ENCODE measurements at regions of chr11 and their contacts with region 1.

Region 1: DNA sequence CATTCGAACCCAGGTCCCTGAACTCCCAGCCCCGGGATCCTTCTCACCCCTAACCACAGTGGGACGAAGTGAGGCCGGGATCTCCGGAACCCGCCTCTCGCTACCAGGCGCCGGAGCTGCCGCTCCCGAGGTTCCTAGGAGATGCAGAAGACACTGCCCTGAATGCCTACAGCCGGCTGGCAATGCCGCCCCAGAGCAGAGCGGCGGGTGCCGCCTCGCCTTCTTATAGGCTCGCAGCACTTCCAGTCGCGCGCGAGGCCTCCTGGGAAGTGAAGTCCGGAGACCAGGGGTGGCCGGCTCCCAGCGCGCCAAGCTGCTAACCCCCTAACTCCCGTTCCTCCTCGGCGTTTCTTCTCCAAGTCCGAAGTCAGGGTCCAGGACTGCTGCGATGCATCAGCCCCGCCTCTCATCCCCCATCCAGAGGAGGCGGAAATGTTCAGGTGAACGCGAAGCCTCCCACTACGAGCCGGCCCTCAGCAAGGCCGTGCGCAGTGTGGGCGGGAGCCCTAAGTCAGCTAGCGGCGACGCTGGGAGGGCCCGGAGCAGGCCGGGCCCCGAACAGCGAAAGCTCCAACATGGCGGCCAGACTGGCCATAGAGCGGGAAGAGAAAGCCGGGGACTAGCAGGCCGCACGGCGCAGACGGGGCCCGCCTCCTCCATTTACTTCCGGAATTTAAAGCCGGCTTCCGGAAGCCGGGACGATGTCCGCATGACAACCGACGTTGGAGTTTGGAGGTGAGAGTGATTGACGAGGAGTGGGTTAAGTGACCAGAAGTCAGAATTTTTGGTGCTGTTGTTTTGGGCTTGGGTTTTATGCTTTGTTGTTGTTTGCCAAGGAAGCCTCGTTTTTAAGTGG is at the starts of genes CYB561A3 and TMEM138:
- DNase-seq: peak; percentile 89 to 96
- H3K4me3 ChIP-seq: peak within 1 kb of the TSS; percentile 86
- H3K27ac ChIP-seq: peak within 1 kb of the TSS; percentile 93
- H3K4me1 ChIP-seq: peaks cover 20% of the 10 kb centered on the region
- H3K27me3 ChIP-seq: no peaks in the 10 kb centered on the region
- CTCF ChIP-seq: no peak
- total RNA-seq, gene CYB561A3: 96.9 and 120 TPM in 2 replicates
- total RNA-seq, gene TMEM138: 32.5 and 46.1 TPM in 2 replicates

Region 2: GRCh38 chr11:60961203-60961602 is 400.7 kb before region 1 on chr11:
- CTCF ChIA-PET with region 1: no interaction called
- POLR2A ChIA-PET with region 1: interaction called, 11 read pairs
- intact Hi-C with region 1: no loop called
- DNase-seq: no peak
- H3K4me3 ChIP-seq: no peak overlapping the region
- H3K27ac ChIP-seq: no peak overlapping the region
- H3K4me1 ChIP-seq: 0 out of 2 replicates have a peak, but pooled peaks cover 4% of the 10 kb centered on the region
- H3K27me3 ChIP-seq: peaks cover 10% of the 10 kb centered on the region; the same call in 1 of the 2 replicates
- CTCF ChIP-seq: no peak

Region 3: DNA sequence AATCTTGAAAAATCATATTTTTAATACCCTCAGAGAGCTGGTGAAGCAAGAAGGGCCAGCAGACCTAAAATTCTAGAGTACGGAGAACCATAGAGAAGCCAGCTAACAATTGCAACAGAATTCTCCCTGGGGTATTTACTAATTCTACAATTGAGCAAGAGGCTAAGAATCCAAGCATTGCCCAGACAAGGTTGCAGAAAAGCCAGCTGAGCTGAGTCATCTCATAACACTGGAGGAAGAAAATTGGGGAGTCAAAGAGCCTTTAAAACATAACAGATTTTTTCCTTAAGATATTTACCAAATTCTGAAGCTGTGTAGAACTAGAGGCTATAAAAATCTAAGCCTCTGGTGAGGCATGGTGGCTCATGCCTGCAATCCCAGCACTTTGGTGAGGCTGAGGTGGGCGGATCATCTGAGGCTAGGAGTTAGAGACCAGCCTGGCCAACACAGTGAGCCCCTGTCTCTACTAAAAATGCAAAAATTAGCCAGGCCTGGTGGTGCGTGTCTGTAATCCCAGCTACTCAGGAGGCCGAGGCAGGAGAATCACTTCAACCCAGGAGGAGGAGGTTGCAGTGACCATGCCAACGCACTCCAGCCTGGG is 16.9 kb after region 1 on chr11:
- CTCF ChIA-PET with region 1: no interaction called
- POLR2A ChIA-PET with region 1: interaction called, 12 read pairs
- intact Hi-C with region 1: loop called (anchors 2 kb)
- DNase-seq: peak; percentile 47 to 92
- H3K4me3 ChIP-seq: no peak overlapping the region
- H3K27ac ChIP-seq: peak overlapping the region; percentile 62
- H3K4me1 ChIP-seq: peaks cover 24% of the 10 kb centered on the region
- H3K27me3 ChIP-seq: no peaks in the 10 kb centered on the region
- CTCF ChIP-seq: no peak

Region 4: DNA sequence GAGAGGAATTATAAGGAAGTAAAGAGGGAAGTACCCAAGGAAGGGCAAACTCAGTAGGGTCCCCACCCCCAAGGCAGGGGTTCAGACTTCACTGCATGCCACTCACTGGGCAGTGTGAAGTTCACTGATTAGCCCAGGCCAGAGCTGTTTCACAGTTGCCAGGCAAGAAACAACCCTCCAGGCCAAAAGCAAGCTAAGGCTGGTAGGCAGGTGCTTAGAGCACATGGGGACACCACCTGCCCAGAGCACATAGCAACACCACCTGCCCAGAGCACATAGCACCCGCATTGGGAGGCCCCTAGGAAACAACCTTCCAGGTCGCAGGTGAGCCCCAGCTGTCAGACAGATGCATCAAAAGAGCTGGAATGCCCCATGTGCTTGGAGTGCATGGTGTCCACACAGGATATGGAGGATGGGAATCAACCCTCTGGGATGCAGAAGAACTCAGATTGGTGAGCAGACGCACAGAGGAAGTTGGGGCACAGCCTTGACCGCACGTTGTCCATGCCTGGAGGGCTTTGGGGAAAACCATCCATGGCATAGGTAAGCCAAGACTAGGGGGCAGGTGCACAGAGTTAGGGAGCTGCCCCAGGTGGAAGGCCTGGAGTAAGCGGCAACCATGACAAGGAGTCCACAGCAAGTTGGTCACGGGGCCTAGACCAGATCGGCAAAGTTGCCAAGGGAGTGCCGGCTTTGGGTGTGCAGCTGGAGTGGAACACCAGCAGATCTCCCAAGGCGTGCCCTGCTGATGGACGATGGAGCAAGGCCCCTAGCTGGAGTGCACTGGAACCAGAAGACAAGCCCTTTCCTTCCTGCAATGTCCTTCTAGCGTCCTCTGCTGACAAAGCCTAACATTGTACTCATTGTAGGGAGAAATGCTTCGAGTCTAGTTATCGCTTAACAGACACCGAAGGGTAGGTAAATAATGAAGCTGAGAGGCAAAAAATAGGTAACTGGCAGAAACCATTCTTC is 22.6 kb after region 1 on chr11:
- CTCF ChIA-PET with region 1: interaction called, 8 read pairs
- POLR2A ChIA-PET with region 1: interaction called, 12 read pairs
- intact Hi-C with region 1: loop called (anchors 2 kb)
- DNase-seq: no peak
- H3K4me3 ChIP-seq: no peak overlapping the region
- H3K27ac ChIP-seq: no peak overlapping the region
- H3K4me1 ChIP-seq: peaks cover 4% of the 10 kb centered on the region
- H3K27me3 ChIP-seq: no peaks in the 10 kb centered on the region
- CTCF ChIP-seq: no peak

Region 5: GRCh38 chr11:61392981-61393595 is 31.2 kb after region 1 on chr11:
- CTCF ChIA-PET with region 1: interaction called, 5 read pairs
- POLR2A ChIA-PET with region 1: interaction called, 5 read pairs
- intact Hi-C with region 1: loop called (anchors 2 kb)
- DNase-seq: peak in 1 of 2 experiments; percentile 10
- H3K4me3 ChIP-seq: peak overlapping the region; percentile 81
- H3K27ac ChIP-seq: peak overlapping the region; percentile 52
- H3K4me1 ChIP-seq: peaks cover 11% of the 10 kb centered on the region
- H3K27me3 ChIP-seq: no peaks in the 10 kb centered on the region
- CTCF ChIP-seq: no peak; the same call in 1 of the 2 replicates

Region 6: DNA sequence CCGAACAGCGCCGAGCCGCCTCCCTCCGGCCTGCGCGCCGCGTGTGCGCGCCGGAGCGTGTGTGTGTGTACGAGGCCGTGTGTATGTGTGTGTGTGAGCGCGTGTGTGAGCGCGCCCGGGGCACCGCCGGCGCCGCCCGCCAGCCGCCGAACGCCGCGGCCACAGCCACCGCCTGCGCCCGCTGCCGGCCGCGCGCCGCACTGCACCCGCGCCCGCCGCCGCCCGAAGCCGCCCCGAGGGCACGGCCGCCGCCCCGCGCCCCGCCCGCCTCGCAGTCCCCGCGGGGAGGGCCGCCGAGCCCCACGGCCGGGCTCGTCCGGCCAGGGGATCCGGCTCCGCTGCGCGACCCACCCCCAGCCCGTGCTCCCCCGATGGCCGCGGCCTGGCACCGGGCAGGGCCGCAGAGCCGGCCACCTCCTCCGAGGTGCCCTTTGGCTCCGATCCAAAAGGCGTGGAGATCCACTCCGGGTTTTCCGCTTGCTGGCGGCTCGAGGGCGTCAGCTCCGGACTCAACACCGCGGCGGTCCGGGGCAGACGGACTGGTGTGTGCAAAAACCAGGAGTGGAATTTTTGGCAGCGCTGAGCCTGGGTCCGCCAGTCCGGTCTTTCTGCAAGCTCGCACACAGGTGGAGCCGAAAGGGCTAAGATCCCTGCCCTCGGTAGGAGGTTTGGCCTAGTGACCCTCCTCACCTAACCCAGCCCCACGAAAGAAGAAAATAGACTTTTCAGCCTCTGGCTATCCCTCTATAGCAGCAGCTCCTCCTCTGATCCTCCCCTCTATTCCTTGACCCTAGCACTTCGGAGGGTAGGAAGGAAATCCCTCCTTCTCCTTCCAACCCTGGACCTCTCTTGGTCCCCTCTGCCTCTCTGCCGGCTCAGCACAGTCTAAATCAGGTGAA is 219.4 kb after region 1 on chr11 and contains the start of gene SYT7:
- CTCF ChIA-PET with region 1: no interaction called
- POLR2A ChIA-PET with region 1: no interaction called
- intact Hi-C with region 1: no loop called
- DNase-seq: peak; percentile 90 to 99
- H3K4me3 ChIP-seq: peak within 1 kb of the TSS; percentile 57; the same call in 1 of the 2 replicates
- H3K27ac ChIP-seq: no peak within 1 kb of the TSS
- H3K4me1 ChIP-seq: peaks cover 4% of the 10 kb centered on the region; the same call in 1 of the 2 replicates
- H3K27me3 ChIP-seq: peaks cover 37% of the 10 kb centered on the region
- CTCF ChIP-seq: peak; percentile 28; the same call in 1 of the 2 replicates
- total RNA-seq, gene SYT7: 4.0 and 8.9 TPM in 2 replicates

Region 7: GRCh38 chr11:61695917-61696316 is 334.0 kb after region 1 on chr11:
- CTCF ChIA-PET with region 1: no interaction called
- POLR2A ChIA-PET with region 1: interaction called, 18 read pairs
- intact Hi-C with region 1: no loop called
- DNase-seq: peak; percentile 91 to 94
- H3K4me3 ChIP-seq: peak overlapping the region; percentile 34; the same call in 1 of the 2 replicates
- H3K27ac ChIP-seq: peak overlapping the region; percentile 96
- H3K4me1 ChIP-seq: peaks cover 73% of the 10 kb centered on the region
- H3K27me3 ChIP-seq: no peaks in the 10 kb centered on the region
- CTCF ChIP-seq: no peak

Region 8: GRCh38 chr11:63146581-63146980 is 1784.7 kb after region 1 on chr11:
- CTCF ChIA-PET with region 1: no interaction called
- POLR2A ChIA-PET with region 1: no interaction called
- intact Hi-C with region 1: no loop called
- DNase-seq: no peak
- H3K4me3 ChIP-seq: no peak overlapping the region
- H3K27ac ChIP-seq: no peak overlapping the region
- H3K4me1 ChIP-seq: no peaks in the 10 kb centered on the region
- H3K27me3 ChIP-seq: peaks cover 24% of the 10 kb centered on the region; the same call in 1 of the 2 replicates
- CTCF ChIP-seq: no peak